Activated CD4-positive, alpha-beta T cell treated with anti-CD3 and anti-CD28 coated beads for 36 hours (primary cell): ENCODE measurements at regions of chr4 and their contacts with region 1.

Region 1: GRCh38 chr4:20544645-20545044 is 155.6 kb upstream of the PACRGL start:
- DNase-seq: no peak
- ATAC-seq: no peak
- H3K4me3 Mint-ChIP-seq: no peak overlapping the region
- H3K27ac Mint-ChIP-seq: no peak overlapping the region
- H3K4me1 Mint-ChIP-seq: no peaks in the 10 kb centered on the region
- H3K27me3 Mint-ChIP-seq: no peaks in the 10 kb centered on the region

Region 2: GRCh38 chr4:20395160-20395773 is 149.4 kb before region 1 on chr4:
- CTCF ChIA-PET with region 1: no interaction called
- POLR2A ChIA-PET with region 1: no interaction called
- intact Hi-C with region 1: loop called in 1 of 2 experiments (anchors 1 kb)
- DNase-seq: peak; percentile 48
- ATAC-seq: no peak
- H3K4me3 Mint-ChIP-seq: no peak overlapping the region
- H3K27ac Mint-ChIP-seq: no peak overlapping the region
- H3K4me1 Mint-ChIP-seq: no peaks in the 10 kb centered on the region
- H3K27me3 Mint-ChIP-seq: peaks cover 2% of the 10 kb centered on the region

Region 3: DNA sequence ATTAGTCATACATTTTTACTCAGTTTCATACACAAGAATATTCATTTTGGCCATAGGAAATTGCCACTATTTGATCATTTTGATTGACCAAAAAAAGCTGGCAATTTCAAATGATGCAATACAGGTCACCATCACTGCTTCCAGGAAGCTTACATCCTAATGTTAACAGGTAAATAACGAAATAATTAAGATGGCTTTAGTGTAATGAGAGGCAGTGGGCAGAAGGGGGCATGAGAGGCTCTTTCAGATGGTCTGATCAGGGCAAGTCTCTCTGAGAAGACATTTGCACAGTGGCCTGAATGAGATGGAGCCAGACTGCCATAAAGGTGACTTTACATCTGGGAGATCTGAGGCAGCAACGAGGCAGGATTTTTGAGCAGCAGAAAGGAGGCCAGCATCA is 122.2 kb before region 1 on chr4:
- CTCF ChIA-PET with region 1: no interaction called
- POLR2A ChIA-PET with region 1: no interaction called
- intact Hi-C with region 1: loop called (anchors 1 to 10 kb)
- DNase-seq: peak; percentile 51
- ATAC-seq: peak; percentile 59
- H3K4me3 Mint-ChIP-seq: no peak overlapping the region
- H3K27ac Mint-ChIP-seq: no peak overlapping the region
- H3K4me1 Mint-ChIP-seq: peaks cover 8% of the 10 kb centered on the region
- H3K27me3 Mint-ChIP-seq: peaks cover 2% of the 10 kb centered on the region